H1 (cell line): ENCODE measurements at regions of chr6 and their contacts with region 1.

Region 1: DNA sequence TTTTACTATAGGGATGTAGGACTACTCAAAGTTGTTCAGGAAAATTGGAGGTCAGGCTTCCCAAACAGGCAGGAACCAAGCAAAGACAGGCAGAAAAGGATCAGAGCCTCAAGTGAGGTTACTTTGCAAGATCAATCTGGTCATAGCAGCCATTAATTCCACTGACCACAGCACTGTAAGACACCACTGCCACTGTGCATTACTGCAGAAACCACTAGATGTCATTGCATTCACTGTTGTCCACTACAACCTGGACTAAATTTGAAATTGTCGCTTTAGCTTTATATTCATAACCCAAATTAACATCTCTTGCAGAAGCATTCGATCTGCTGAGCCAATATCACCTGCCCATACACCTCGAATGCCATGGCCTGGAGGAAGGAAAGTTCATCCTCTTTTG is 126.9 kb upstream of the UFL1 start:
- DNase-seq: no peak
- H3K4me3 ChIP-seq: no peak overlapping the region
- H3K27ac ChIP-seq: no peak overlapping the region
- H3K4me1 ChIP-seq: peaks cover 0 to 4% (median 1%) of the 10 kb centered on the region in 4 experiments; a peak in 2 of 7 replicates
- H3K27me3 ChIP-seq: no peaks in the 10 kb centered on the region
- CTCF ChIP-seq: peak in 1 of 3 experiments; percentile 49; a peak in 1 of 4 replicates
- EP300 ChIP-seq: no peak
- POLR2A ChIP-seq: no peak
- RAD21 ChIP-seq: peak; percentile 38 to 52

Region 2: GRCh38 chr6:96276305-96276704 is 118.4 kb before region 1 on chr6:
- CTCF ChIA-PET with region 1: no interaction called
- POLR2A ChIA-PET with region 1: no interaction called
- DNase-seq: no peak
- H3K4me3 ChIP-seq: no peak overlapping the region
- H3K27ac ChIP-seq: no peak overlapping the region
- H3K4me1 ChIP-seq: no peaks in the 10 kb centered on the region
- H3K27me3 ChIP-seq: no peaks in the 10 kb centered on the region
- CTCF ChIP-seq: peak in 1 of 3 experiments; percentile 30; a peak in 1 of 4 replicates
- EP300 ChIP-seq: no peak
- POLR2A ChIP-seq: no peak
- RAD21 ChIP-seq: peak; percentile 29 to 40; a peak in 3 of 4 replicates

Region 3: DNA sequence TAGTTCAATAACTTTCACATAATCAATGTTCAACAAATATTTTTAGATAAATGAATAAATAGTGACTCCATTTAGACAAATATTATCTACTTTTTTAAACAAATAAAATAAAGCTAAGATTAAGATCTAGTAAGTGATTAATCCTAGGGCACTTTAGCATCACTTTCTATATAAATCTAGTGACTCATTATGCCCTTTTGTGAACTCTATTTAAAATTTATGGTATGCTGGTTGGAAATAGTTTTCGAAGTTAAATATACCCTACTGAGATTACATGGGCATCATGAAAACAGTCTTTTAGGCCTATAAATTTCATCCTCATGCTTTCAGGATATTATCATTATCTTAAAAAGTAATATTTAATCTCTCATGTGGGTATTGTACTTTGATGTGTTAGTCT is 13.5 kb before region 1 on chr6:
- CTCF ChIA-PET with region 1: no interaction called
- POLR2A ChIA-PET with region 1: no interaction called
- DNase-seq: no peak
- H3K4me3 ChIP-seq: no peak overlapping the region
- H3K27ac ChIP-seq: no peak overlapping the region
- H3K4me1 ChIP-seq: no peaks in the 10 kb centered on the region
- H3K27me3 ChIP-seq: no peaks in the 10 kb centered on the region
- CTCF ChIP-seq: no peak
- EP300 ChIP-seq: no peak
- POLR2A ChIP-seq: no peak
- RAD21 ChIP-seq: no peak

Region 4: DNA sequence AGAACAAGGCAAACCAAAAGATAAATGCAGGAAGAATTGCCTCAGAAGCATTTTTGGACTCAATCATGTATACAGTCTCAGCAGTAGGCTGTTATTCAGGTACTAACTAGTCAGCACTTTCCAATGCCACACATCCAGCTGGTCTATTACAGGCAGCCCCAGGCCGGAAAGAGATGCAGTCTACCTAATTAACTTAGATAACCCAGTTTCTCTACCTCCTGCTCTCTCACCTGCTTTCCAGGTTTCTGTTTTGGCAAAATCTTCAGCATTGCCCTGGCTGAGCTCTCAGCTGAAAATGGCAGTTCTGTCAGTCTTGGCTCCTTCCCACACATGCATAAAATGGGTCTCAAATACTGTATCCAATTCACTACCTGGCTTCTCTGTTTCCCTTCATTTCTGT is 25.6 kb after region 1 on chr6:
- CTCF ChIA-PET with region 1: no interaction called
- POLR2A ChIA-PET with region 1: no interaction called
- DNase-seq: no peak
- H3K4me3 ChIP-seq: no peak overlapping the region
- H3K27ac ChIP-seq: no peak overlapping the region
- H3K4me1 ChIP-seq: 0 out of 7 replicates have a peak, but pooled peaks cover 0 to 3% (median 0%) of the 10 kb centered on the region in 4 experiments
- H3K27me3 ChIP-seq: no peaks in the 10 kb centered on the region
- CTCF ChIP-seq: no peak
- EP300 ChIP-seq: no peak
- POLR2A ChIP-seq: no peak
- RAD21 ChIP-seq: no peak

Region 5: DNA sequence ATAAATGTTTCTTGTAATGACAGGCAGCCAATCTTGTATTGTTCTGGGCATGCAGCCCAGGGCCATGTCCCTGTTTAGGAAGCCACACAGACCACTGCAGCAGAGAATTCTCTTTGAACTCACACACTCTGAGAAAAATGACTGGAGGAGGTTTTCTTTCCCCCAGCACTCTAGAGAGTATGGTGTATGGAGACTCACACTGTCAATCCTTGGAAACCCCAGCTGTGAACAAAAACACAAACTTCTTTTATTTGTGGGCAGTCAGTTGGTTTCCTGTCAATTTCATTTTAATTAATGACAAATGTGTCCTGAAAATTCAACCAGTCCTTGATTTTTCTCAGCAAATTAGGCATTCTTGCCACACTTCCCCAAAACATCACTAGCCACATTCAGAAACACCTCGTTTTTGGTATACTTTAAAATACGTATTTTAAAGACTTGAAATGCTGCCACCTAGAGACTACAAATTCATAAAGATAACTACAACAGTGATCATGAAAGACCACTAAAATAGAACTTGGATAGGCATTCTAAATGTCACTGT is 74.0 kb after region 1 on chr6:
- CTCF ChIA-PET with region 1: interaction called, 12 read pairs
- POLR2A ChIA-PET with region 1: no interaction called
- DNase-seq: no peak
- H3K4me3 ChIP-seq: no peak overlapping the region
- H3K27ac ChIP-seq: no peak overlapping the region
- H3K4me1 ChIP-seq: no peaks in the 10 kb centered on the region
- H3K27me3 ChIP-seq: no peaks in the 10 kb centered on the region
- CTCF ChIP-seq: peak in 1 of 3 experiments; percentile 7; a peak in 2 of 4 replicates
- EP300 ChIP-seq: no peak
- POLR2A ChIP-seq: no peak
- RAD21 ChIP-seq: peak in 1 of 2 experiments; percentile 25; a peak in 3 of 4 replicates

Region 6: GRCh38 chr6:96563853-96564252 is 169.1 kb after region 1 on chr6:
- CTCF ChIA-PET with region 1: no interaction called
- POLR2A ChIA-PET with region 1: no interaction called
- DNase-seq: no peak
- H3K4me3 ChIP-seq: no peak overlapping the region
- H3K27ac ChIP-seq: no peak overlapping the region
- H3K4me1 ChIP-seq: peaks cover 0 to 3% (median 0%) of the 10 kb centered on the region in 4 experiments; a peak in 3 of 7 replicates
- H3K27me3 ChIP-seq: no peaks in the 10 kb centered on the region
- CTCF ChIP-seq: no peak
- EP300 ChIP-seq: no peak
- POLR2A ChIP-seq: no peak
- RAD21 ChIP-seq: no peak